ENCODE measurements at regions of chr13 and their contacts with region 1.

Region 1: DNA sequence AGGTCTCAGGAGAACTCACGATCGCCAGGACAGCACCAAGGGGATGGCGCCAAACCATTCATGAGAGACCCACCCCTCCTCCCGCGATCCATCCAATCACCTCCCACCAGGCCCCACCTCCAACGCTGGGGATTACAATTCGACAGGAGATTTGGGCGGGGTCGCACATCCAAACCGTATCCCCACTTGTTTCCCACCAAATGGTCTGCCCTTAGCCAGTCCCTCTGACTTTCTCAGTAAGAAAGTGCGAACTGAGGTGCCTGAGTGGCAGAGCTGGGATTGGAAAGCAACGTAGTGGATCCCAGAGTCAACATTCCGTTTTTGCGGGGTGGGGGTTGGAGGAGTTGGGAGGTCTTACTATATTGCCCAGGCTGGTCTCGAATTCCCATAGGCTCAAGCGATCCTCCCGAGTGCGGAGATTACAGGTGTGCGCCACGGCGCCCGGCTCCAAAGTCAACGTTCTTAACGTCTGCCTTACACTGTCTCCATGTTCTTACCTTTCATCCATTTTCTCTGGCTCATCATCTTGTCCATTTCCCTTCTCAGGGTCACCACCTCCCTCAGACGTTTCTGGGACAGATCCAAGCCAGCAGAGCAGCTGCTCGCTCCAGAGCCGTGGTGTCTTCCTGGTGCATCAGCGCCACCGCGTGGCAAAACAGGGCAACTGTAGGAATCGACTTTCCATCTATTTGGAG is 102.7 kb upstream of the ABCC4 start:
- DNase-seq: peak; percentile 77
- CTCF ChIP-seq: peak; percentile 94

Region 2: GRCh38 chr13:94674609-94675348 is 729.2 kb before region 1 on chr13:
- in situ Hi-C with region 1: loop called (anchors 25 kb)
- DNase-seq: peak; percentile 50
- CTCF ChIP-seq: peak; percentile 76

Region 3: DNA sequence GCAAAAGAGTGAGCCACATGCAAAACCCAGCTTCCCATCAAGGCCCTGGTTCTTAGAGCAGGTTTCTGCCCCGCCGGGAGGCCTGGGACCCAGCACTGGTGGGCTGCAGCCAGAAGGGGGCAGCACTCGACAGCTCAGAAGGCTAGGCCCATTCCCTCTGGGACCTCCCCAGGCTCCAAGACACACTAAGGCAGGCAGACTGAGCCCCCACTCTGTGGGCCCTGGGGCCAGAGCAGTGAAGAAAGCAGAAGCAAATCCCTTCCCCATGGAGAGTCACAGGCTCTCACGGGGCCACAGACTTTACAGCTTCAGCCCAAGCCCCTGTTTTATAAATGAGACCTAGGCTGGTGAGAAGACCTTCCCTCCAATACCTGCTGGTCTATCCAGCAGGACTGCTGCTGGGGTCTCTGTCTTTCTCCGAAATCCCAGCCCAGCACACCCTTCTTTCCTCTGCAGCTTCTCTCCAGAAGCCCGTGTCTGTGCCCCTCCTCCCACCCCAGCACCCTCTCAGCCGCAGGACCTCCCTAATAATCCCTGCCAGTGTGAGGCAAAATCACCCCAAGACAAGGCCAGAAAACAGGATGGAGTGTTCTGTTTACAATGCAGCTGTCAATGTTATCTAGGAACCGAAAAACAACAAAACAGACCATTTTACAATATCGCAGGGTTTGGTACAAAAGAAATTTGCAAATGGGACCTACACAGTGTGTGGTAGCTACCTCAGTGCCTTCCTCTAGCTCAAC is 212.0 kb before region 1 on chr13:
- in situ Hi-C with region 1: loop called (anchors 5 kb)
- DNase-seq: peak; percentile 62
- CTCF ChIP-seq: peak; percentile 97

Region 4: DNA sequence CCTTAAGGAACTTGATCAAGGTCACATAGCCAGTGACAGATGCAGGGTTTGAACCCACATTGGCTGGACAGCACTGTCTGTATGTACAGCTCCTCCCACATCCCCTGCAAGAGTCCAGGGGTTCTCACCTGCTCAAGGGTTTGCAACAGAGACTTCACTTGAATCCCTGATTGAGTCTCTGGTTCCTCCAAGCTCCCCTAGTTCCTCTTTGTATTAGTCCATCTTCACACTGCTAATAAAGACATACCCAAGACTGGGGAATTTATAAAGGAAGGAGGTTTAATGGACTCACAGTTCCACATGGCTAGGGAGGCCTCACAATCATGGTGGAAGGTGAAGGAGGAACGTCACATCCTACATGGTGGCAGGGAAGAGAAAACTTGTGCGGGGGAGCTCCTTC is 75.8 kb after region 1 on chr13:
- in situ Hi-C with region 1: loop called (anchors 10 kb)
- DNase-seq: no peak
- CTCF ChIP-seq: no peak

Measured in GM13977 (cell line).